ENCODE measurements at regions of chr17 and their contacts with region 1.

Region 1: DNA sequence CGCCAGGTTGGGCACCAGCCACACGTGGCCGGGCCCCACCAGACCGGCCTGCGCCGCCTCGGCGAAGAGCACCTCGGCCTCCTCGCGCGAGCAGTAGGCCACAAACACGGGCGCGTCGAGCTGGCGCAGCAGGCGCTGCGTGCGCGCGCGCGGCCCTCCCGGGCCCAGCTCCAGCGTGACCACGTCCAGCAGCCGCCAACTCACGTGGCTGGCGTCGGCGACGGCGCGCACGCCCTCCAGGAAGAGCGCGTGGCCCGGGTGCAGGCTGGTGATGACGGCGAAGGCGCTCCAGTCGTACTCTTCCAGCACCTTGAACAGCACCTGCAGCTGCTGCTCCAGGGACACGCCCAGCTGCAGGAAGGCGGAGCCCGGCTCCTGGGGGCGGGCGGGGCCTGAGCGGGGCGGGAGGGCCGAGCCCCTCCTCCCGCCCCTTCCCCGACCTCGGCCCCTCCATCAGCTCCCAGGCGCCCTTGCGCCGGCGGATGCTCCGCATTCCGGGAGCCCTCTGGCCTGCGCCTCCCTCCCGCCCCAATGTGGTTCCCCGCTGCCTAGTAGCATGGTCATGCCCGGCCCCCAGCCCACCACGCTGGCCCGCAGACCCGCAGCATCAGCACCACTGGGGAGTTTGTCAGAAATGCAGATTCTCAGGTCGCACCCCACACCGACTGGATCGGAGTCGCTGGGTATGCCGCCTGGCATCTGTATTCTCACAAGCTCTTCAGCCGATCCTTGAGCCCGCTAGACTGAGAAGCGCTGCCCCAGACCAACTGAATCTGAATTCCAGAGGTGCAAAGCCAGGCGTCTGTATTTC is 7.2 kb downstream of the GRIN2C start:
- DNase-seq: no peak
- H3K4me3 ChIP-seq: peak overlapping the region in 1 of 4 donors; percentile 17
- H3K27ac ChIP-seq: no peak overlapping the region
- H3K4me1 ChIP-seq: peaks cover 6 to 14% (median 10%) of the 10 kb centered on the region in 4 donors
- H3K27me3 ChIP-seq: peaks cover 9 to 84% (median 36%) of the 10 kb centered on the region in 4 donors
- CTCF ChIP-seq: no peak
- EP300 ChIP-seq: no peak
- POLR2A ChIP-seq: no peak

Region 2: GRCh38 chr17:74798239-74798707 is 54.2 kb before region 1 on chr17:
- intact Hi-C with region 1: loop called (anchors 5 kb)
- DNase-seq: no peak
- H3K4me3 ChIP-seq: no peak overlapping the region
- H3K27ac ChIP-seq: no peak overlapping the region
- H3K4me1 ChIP-seq: no peaks in the 10 kb centered on the region
- H3K27me3 ChIP-seq: no peaks in the 10 kb centered on the region
- CTCF ChIP-seq: no peak
- EP300 ChIP-seq: no peak
- POLR2A ChIP-seq: no peak